ENCODE measurements at regions of chr14 and their contacts with region 1.

Region 1: DNA sequence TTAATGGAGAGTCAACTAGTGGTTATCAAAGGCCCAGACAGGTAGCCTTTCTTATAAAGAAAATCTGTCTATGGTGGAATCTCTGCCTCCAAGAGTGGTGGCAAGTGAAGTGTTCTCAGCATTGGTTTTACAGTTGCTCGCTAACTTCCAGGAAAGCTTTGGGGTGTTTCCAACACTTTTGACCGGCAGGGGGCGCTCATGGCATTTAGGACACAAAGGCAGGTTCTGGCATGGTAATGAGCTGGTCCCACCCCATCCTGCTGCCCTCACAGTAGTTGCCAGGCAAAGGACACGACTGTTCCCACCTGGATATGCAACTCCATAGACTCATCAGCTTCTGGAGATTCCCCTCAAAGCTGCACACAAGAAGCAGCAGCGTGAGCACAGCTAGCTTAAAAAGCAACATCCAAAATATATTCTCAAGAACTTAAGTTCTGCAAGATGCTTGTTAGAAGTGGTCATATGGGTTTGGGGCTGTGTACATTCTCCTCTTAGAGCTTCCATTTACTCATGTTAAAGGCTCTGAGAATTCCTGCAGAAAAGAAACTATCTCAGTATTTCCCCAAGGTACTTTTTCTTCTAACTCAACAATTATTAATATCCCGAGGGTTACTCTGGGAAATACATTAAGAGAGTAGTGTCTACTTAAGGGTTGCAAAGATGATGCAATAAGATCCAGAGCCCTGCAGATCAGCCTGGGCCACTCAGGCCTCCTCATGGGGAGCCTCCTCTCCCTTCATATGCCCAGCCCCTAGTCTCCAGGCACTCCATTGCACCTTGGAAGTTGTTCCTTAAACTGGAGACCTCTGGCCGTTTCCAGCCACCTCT is 14.8 kb downstream of the PROX2 start:
- DNase-seq: peak; percentile 83 to 98 (median 92)
- ATAC-seq: peak; percentile 88
- H3K4me3 ChIP-seq: no peak overlapping the region
- H3K4me3 Mint-ChIP-seq: no peak overlapping the region
- H3K27ac ChIP-seq: no peak overlapping the region
- H3K27ac Mint-ChIP-seq: no peak overlapping the region
- H3K4me1 ChIP-seq: peaks cover 8% of the 10 kb centered on the region
- H3K4me1 Mint-ChIP-seq: peaks cover 7% of the 10 kb centered on the region
- H3K27me3 ChIP-seq: no peaks in the 10 kb centered on the region
- H3K27me3 Mint-ChIP-seq: no peaks in the 10 kb centered on the region
- CTCF ChIP-seq: peak; percentile 88

Region 2: GRCh38 chr14:74838166-74838565 is 23.0 kb before region 1 on chr14:
- CTCF ChIA-PET with region 1: interaction called, 8 read pairs
- POLR2A ChIA-PET with region 1: interaction called, 26 read pairs
- intact Hi-C with region 1: no loop called
- DNase-seq: peak in 3 of 14 experiments; percentile 57 to 79 (median 59)
- ATAC-seq: peak; percentile 76
- H3K4me3 ChIP-seq: peak overlapping the region; percentile 8
- H3K4me3 Mint-ChIP-seq: peak overlapping the region; percentile 86
- H3K27ac ChIP-seq: peak overlapping the region; percentile 67 to 88
- H3K27ac Mint-ChIP-seq: peak overlapping the region; percentile 97
- H3K4me1 ChIP-seq: peaks cover 30% of the 10 kb centered on the region
- H3K4me1 Mint-ChIP-seq: peaks cover 87% of the 10 kb centered on the region
- H3K27me3 ChIP-seq: no peaks in the 10 kb centered on the region
- H3K27me3 Mint-ChIP-seq: no peaks in the 10 kb centered on the region
- CTCF ChIP-seq: no peak

Region 3: DNA sequence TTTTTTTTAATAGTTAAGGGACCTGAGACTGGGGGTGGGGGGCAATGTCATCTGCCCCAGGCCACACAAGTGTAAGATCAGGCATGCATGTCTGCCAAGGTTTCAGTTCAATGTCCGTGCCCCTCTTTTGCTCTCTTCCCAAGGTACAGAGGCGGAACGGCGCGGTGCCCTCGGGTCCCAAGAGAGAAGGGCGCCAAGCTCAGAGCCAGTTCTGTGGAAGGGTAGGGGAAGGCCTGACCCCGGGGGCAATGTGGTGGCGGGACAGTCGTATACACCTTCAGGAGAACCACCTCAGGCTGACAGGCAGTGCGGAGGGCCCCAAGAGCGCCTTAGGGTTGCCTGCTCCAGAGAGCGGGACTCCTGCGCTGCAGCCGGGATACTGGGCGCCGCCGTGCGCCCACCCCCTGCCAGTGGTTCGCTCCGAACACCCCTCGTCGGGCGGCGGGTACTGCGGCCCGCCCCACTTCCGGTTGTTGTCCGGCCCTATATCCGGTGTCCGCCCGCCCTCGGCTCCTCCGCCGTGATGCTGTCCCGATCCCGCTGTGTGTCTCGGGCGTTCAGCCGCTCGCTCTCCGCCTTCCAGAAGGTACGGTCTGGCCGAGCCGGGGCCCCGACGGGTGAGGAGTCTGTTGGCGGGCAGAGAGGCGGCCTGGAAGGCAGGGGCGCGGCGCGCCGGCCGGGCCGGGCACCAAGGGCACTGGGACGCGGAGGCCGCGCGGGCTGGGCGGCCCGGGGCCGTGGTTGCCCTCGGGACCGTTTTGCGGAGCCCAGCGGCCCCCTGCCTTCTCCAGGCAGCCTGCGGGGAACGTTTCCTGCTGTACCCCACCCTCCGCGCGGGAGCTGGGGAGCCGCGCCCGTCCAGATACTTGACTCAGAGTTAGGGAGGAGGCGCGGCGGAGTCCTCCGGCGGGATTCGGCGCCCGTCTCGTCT is 20.6 kb after region 1 on chr14 and contains the start of gene DLST:
- CTCF ChIA-PET with region 1: interaction called, 13 read pairs
- POLR2A ChIA-PET with region 1: interaction called, 10 read pairs
- intact Hi-C with region 1: loop called (anchors 2 kb)
- DNase-seq: peak; percentile 70 to 92 (median 80)
- ATAC-seq: peak; percentile 63
- H3K4me3 ChIP-seq: peak within 1 kb of the TSS; percentile 95
- H3K4me3 Mint-ChIP-seq: peak within 1 kb of the TSS; percentile 99
- H3K27ac ChIP-seq: peak within 1 kb of the TSS; percentile 82 to 88
- H3K27ac Mint-ChIP-seq: peak within 1 kb of the TSS; percentile 92
- H3K4me1 ChIP-seq: peaks cover 53% of the 10 kb centered on the region
- H3K4me1 Mint-ChIP-seq: peaks cover 70% of the 10 kb centered on the region
- H3K27me3 ChIP-seq: no peaks in the 10 kb centered on the region
- H3K27me3 Mint-ChIP-seq: no peaks in the 10 kb centered on the region
- CTCF ChIP-seq: no peak
- total RNA-seq, gene DLST: 162 to 170 TPM

Region 4: DNA sequence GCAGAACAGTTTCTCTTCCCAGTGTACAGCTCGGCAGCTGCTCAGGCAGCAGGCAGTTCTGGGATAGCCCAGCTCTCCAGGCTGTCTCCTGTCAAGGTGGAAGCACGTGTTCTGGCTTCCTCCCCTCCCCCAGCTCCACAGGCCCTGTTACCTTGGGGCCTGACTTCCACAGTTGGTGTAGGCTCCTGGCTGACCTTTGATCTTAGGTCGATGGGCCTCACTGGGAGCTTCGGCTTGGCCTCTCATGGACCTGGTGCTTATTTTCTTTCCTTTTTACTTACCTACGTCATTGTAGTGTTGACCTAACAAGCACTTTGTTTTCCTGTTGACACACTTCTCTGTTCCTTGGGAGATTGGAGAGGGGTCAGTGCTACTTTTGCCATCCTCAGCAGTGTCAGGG is 37.6 kb after region 1 on chr14:
- CTCF ChIA-PET with region 1: interaction called, 160 read pairs
- POLR2A ChIA-PET with region 1: interaction called, 7 read pairs
- intact Hi-C with region 1: no loop called
- DNase-seq: no peak
- ATAC-seq: no peak
- H3K4me3 ChIP-seq: no peak overlapping the region
- H3K4me3 Mint-ChIP-seq: no peak overlapping the region
- H3K27ac ChIP-seq: no peak overlapping the region
- H3K27ac Mint-ChIP-seq: peak overlapping the region; percentile 26
- H3K4me1 ChIP-seq: no peaks in the 10 kb centered on the region
- H3K4me1 Mint-ChIP-seq: no peaks in the 10 kb centered on the region
- H3K27me3 ChIP-seq: no peaks in the 10 kb centered on the region
- H3K27me3 Mint-ChIP-seq: no peaks in the 10 kb centered on the region
- CTCF ChIP-seq: no peak

Region 5: DNA sequence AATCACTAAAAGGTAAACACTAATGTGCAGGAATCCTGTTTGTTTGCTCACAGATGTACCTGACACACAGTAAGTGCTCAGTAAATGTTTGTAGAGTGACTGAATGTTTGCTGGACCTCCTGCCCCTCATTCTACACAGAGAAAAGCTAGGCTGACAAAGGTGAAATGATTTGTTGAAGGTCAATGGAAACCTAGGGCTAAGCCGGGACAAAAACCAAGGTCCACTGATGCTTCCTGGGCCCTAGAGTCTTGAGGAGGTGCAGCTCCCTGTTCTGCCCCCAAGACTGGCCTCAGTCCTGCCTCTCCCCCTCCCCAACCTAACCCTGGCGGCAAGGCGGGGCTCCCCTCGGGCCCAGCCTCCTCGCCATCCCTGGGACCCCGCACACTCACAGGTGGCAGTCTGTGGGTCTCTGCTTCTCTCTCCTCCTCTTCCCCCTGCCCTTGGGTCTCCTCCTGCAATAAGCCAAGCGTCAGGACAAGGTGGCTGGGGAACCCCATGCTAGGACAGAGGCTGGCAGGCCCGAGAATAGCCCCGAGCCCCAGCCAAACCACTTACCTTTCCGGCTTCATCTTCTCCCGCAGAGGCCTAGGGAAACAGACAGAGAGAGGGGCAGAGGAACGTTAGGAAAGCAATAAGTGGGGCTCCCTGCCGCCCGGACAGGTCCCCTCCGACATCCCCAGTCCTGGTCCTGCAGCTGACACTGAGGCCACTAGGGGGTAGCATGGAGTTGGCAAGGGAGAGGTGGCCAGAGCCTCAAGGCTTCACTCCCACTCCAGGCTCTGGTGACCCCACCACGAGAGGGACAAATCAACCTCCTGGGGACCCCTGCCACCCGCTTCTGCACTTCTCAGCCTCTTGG is 84.9 kb after region 1 on chr14:
- CTCF ChIA-PET with region 1: interaction called, 6 read pairs
- POLR2A ChIA-PET with region 1: no interaction called
- intact Hi-C with region 1: loop called in 1 of 2 experiments (anchors 5 kb)
- DNase-seq: peak; percentile 57 to 84 (median 68)
- ATAC-seq: peak; percentile 71
- H3K4me3 ChIP-seq: no peak overlapping the region
- H3K4me3 Mint-ChIP-seq: peak overlapping the region; percentile 46
- H3K27ac ChIP-seq: no peak overlapping the region
- H3K27ac Mint-ChIP-seq: peak overlapping the region; percentile 52
- H3K4me1 ChIP-seq: peaks cover 32% of the 10 kb centered on the region
- H3K4me1 Mint-ChIP-seq: peaks cover 33% of the 10 kb centered on the region
- H3K27me3 ChIP-seq: no peaks in the 10 kb centered on the region
- H3K27me3 Mint-ChIP-seq: peaks cover 7% of the 10 kb centered on the region
- CTCF ChIP-seq: peak; percentile 92

Region 6: GRCh38 chr14:75088574-75089373 is 227.7 kb after region 1 on chr14:
- CTCF ChIA-PET with region 1: interaction called, 22 read pairs
- POLR2A ChIA-PET with region 1: interaction called, 4 read pairs
- intact Hi-C with region 1: loop called (anchors 1 kb)
- DNase-seq: peak in 10 of 14 experiments; percentile 8 to 71 (median 31)
- ATAC-seq: peak; percentile 72
- H3K4me3 ChIP-seq: no peak overlapping the region
- H3K4me3 Mint-ChIP-seq: no peak overlapping the region
- H3K27ac ChIP-seq: no peak overlapping the region
- H3K27ac Mint-ChIP-seq: no peak overlapping the region
- H3K4me1 ChIP-seq: no peaks in the 10 kb centered on the region
- H3K4me1 Mint-ChIP-seq: no peaks in the 10 kb centered on the region
- H3K27me3 ChIP-seq: no peaks in the 10 kb centered on the region
- H3K27me3 Mint-ChIP-seq: no peaks in the 10 kb centered on the region
- CTCF ChIP-seq: peak; percentile 84